Activated CD8-positive, alpha-beta T cell treated with anti-CD3 and anti-CD28 coated beads for 36 hours (primary cell): ENCODE measurements at regions of chr1 and their contacts with region 1.

Region 1: DNA sequence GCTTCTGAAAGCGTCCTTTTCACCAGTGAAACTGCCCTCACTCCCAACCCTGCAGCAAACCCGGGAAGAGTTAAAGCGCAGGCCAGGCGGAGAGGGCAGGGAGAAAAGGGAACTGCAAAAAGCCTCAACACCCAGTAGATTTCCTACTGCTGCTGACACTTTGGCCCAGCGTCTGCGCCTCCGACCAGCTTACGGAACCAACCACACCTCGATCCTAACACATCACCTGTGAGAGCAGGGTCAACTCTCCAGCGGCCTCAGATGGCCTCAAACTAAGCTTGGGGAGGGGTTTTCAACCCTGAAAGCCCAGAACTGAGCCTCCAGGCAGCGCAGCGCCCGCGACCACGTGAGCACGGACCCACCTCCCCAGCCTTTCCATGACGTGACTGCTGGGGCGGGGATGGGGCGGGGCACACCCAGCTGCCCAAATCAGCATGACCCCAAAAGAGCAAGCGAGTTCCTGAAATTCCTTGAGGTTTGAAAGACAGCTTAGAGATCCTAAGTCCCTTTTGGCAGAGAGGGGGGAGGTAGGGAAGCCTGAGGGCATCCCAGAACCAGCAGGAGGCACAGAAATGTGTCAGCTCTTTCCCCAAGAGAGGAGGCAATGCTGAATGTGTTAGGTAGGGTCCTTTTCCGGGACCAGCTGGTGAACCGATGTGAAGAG is 59.1 kb downstream of the ITPKB start:
- DNase-seq: peak; percentile 89
- ATAC-seq: peak; percentile 18
- H3K4me3 Mint-ChIP-seq: peak overlapping the region; percentile 68
- H3K27ac Mint-ChIP-seq: peak overlapping the region; percentile 94
- H3K4me1 Mint-ChIP-seq: peaks cover 98% of the 10 kb centered on the region
- H3K27me3 Mint-ChIP-seq: no peaks in the 10 kb centered on the region
- CTCF ChIP-seq: no peak

Region 2: GRCh38 chr1:226642876-226643576 is 37.0 kb before region 1 on chr1:
- CTCF ChIA-PET with region 1: interaction called, 7 read pairs
- POLR2A ChIA-PET with region 1: interaction called, 5 read pairs
- intact Hi-C with region 1: loop called (anchors 5 kb)
- DNase-seq: peak; percentile 91
- ATAC-seq: peak; percentile 88
- H3K4me3 Mint-ChIP-seq: peak overlapping the region; percentile 55
- H3K27ac Mint-ChIP-seq: peak overlapping the region; percentile 95
- H3K4me1 Mint-ChIP-seq: peaks cover 62% of the 10 kb centered on the region
- H3K27me3 Mint-ChIP-seq: no peaks in the 10 kb centered on the region
- CTCF ChIP-seq: no peak

Region 3: DNA sequence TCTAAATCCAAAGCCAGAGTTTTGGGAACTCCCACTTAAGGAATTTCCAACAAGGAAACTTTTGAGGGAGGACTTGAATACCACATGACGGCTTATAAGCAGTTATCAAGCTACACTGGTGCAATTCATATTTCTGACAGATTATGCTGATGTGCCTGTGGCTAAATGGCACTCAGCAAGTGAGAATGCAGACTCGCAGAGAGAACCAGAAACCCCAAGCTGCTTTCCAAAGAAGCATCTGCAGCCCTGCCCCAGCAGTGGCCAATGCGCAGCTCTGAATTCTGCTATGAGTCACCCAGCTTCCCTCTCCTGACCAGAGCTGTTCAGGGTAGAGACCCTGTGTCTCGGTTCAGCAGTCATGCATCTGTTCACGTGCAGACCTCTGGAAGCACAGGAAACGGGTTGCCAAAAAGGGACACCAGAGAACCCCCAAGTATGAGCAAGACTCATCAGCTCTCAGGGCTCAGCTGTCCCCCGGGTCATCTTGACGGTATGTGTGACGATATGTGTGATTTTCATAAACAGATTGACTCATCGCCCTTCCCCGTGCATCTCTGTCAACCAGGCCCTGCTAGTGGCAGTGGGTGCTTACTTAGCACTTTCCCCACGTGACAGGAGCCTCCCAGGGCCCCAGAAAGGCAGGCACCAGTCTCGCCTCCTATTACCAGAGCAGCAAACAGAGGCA is 17.2 kb before region 1 on chr1:
- CTCF ChIA-PET with region 1: interaction called, 6 read pairs
- POLR2A ChIA-PET with region 1: interaction called, 56 read pairs
- intact Hi-C with region 1: loop called (anchors 1 kb)
- DNase-seq: peak; percentile 96
- ATAC-seq: peak; percentile 91
- H3K4me3 Mint-ChIP-seq: peak overlapping the region; percentile 49
- H3K27ac Mint-ChIP-seq: peak overlapping the region; percentile 96
- H3K4me1 Mint-ChIP-seq: peaks cover 98% of the 10 kb centered on the region
- H3K27me3 Mint-ChIP-seq: no peaks in the 10 kb centered on the region
- CTCF ChIP-seq: no peak

Region 4: GRCh38 chr1:226697151-226697939 is 17.4 kb after region 1 on chr1:
- CTCF ChIA-PET with region 1: interaction called, 42 read pairs
- POLR2A ChIA-PET with region 1: interaction called, 11 read pairs
- intact Hi-C with region 1: no loop called
- DNase-seq: peak; percentile 48
- ATAC-seq: peak; percentile 75
- H3K4me3 Mint-ChIP-seq: peak overlapping the region; percentile 11
- H3K27ac Mint-ChIP-seq: peak overlapping the region; percentile 93
- H3K4me1 Mint-ChIP-seq: peaks cover 90% of the 10 kb centered on the region
- H3K27me3 Mint-ChIP-seq: no peaks in the 10 kb centered on the region
- CTCF ChIP-seq: no peak

Region 5: DNA sequence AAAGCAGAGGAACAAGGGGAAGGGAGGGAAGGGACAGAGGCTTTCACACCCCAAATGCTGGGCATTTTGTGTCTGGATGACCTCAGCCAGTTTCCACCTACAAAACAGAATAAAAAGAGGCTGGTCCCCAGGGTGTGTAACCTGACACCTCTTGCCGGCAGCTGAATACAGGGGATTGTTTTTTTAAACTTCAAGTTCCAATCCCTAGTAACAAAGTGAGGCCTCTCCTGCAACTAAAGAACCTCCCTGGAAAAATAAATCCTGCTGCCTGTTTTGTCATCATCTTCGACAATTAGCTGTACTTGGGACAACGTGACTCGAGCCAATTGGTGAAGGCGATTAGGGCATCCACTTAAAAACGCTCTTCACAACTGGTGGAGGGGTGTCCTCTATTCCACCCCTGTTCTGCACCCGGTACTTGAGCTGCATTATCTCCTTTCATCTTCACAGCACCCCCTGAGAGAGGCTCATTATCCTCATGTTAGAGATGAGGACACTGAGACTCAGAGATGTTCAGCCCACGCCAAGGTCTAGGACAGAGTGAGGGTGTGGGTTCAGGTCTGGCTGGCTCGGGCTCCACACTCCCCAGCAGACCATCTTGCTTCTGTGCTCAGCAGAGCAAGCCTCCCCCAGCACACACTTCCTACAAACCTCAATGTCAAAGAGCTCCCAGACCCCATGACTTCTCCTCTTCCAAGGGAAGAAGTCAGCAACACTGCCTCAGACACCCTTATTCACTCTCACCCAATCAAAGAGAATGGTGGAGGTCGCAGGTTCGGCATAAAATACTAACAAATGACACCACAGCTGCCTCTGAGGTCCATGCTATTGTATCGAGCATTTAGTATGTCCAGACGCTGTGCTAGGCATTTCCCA is 43.9 kb after region 1 on chr1:
- CTCF ChIA-PET with region 1: interaction called, 6 read pairs
- POLR2A ChIA-PET with region 1: interaction called, 10 read pairs
- intact Hi-C with region 1: no loop called
- DNase-seq: peak; percentile 59
- ATAC-seq: peak; percentile 31
- H3K4me3 Mint-ChIP-seq: peak overlapping the region; percentile 92
- H3K27ac Mint-ChIP-seq: peak overlapping the region; percentile 95
- H3K4me1 Mint-ChIP-seq: peaks cover 91% of the 10 kb centered on the region
- H3K27me3 Mint-ChIP-seq: no peaks in the 10 kb centered on the region
- CTCF ChIP-seq: no peak